PC-9 (cell line): ENCODE measurements at regions of chr10 and their contacts with region 1.

Region 1: DNA sequence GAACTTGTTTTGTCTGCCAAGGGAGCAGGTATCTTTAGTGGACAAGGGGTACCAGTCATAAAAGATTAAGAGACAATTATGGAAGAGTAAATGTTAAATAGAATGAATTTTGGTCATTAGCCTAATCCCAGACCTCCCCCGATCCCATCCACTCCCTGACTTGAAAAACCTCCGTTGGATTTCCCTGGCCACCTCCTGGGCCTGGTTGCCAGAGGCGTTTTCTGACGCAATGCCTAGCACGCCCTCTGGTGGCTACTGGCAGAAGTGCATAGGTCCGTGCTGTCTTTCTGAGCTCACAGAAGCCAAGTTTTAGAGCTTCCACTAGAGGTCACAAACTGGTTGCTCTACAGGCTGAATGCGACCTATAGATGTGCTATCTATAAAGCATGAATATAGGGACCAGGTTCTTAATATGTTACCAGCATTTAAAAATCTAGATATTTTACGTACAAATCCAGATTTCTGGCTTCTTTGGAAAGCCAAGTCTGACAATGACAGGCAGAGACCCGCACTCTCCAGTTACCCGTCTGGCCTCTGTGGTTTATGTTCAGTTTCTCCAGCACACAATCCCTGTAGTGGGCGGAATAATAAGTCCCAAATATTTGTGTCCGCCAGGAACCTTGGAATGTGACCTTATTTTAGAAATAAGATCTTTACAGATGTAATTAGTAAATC is 39.8 kb downstream of the SPOCK2 start:
- DNase-seq: peak; percentile 88 to 92
- H3K4me3 ChIP-seq: no peak overlapping the region
- H3K27ac ChIP-seq: no peak overlapping the region
- H3K4me1 ChIP-seq: peaks cover 8% of the 10 kb centered on the region; the same call in 1 of the 2 replicates
- H3K27me3 ChIP-seq: no peaks in the 10 kb centered on the region
- CTCF ChIP-seq: peak; percentile 100

Region 2: DNA sequence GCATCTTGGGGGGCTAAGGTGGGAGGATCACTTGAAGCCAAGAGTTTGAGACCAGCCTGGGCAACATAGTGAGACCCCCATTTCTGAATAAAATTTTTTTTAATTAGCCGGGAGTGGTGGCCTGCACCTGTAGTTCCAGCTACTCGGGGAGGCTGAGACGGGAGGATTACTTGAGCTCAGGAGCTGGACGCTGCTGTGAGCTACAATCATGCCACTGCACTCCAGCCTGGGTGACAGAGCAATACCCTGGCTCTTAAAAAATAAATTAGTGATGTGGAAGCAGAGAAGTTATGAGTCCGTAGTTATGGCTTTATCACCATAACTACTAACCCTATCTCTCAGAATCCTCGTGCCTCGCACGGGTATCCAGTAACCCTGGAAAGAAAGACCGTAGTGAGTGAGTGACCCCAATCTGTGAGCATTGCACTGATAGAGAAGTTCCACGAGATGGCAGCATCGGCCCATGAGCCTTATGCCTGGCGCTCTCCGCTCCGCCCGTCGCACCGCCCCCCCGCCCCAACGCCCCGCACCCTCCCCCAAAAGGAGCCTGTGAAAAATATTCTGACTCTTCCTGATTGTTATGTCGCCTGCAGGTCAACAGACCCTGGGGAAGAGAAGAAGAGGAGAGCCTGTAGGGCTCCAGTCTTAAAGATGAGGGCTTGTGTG is 734.4 kb before region 1 on chr10:
- CTCF ChIA-PET with region 1: no interaction called
- POLR2A ChIA-PET with region 1: no interaction called
- intact Hi-C with region 1: loop called (anchors 5 kb)
- DNase-seq: peak in 1 of 2 experiments; percentile 46
- H3K4me3 ChIP-seq: no peak overlapping the region
- H3K27ac ChIP-seq: no peak overlapping the region
- H3K4me1 ChIP-seq: peaks cover 14% of the 10 kb centered on the region
- H3K27me3 ChIP-seq: no peaks in the 10 kb centered on the region
- CTCF ChIP-seq: peak; percentile 91

Region 3: DNA sequence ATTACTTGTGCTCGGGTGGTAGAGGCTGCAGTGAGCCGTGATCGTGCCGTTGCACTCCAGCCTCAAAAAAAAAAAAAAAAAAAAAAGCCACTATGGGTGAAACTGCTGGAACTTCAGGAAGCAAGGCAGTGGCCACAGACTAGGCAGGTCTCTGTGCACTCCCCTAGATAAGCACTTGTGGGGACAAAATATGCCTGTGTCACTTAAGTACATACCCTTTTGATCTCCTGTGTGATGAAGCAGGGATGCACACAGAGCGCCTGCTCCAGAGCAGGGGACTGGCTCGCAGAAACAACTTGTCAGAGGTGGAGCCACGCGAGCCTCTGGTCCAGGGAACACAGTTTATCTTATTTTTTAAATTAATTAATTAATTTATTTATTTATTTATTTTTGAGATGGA is 154.7 kb before region 1 on chr10:
- CTCF ChIA-PET with region 1: interaction called, 24 read pairs
- POLR2A ChIA-PET with region 1: interaction called, 4 read pairs
- intact Hi-C with region 1: loop called (anchors 1 kb)
- DNase-seq: no peak
- H3K4me3 ChIP-seq: no peak overlapping the region
- H3K27ac ChIP-seq: no peak overlapping the region
- H3K4me1 ChIP-seq: peaks cover 16% of the 10 kb centered on the region
- H3K27me3 ChIP-seq: no peaks in the 10 kb centered on the region
- CTCF ChIP-seq: no peak

Region 4: DNA sequence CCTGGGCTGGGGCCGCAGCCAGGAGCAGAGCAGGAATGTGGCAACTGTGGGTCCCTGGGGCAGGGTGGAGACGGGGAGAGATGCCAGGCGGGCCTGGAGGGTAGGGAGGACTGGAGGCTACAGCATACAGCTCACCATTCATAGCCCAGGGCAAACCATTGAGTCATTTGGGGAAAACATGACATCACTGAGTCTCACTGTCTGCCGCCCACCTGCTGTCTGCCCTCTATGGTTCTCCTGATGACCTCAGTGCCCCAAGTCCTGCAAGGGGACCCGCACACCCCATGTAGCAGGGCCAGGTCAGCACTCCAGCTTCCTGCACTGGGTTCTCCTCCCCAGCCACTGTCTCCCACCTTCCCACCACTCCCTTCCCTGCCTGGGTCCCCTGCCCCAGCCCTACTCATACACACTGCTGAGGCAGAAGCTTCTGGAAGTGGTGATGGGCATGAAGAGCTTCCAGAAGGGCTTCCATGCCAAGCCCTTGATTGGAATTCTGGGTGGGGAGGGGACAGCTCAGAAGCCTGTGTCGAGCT is 74.0 kb before region 1 on chr10:
- CTCF ChIA-PET with region 1: interaction called, 7 read pairs
- POLR2A ChIA-PET with region 1: no interaction called
- intact Hi-C with region 1: loop called (anchors 5 kb)
- DNase-seq: peak; percentile 69 to 91
- H3K4me3 ChIP-seq: no peak overlapping the region
- H3K27ac ChIP-seq: peak overlapping the region; percentile 56
- H3K4me1 ChIP-seq: peaks cover 37% of the 10 kb centered on the region
- H3K27me3 ChIP-seq: no peaks in the 10 kb centered on the region
- CTCF ChIP-seq: no peak

Region 5: GRCh38 chr10:72079356-72079755 is 30.8 kb after region 1 on chr10:
- CTCF ChIA-PET with region 1: no interaction called
- POLR2A ChIA-PET with region 1: no interaction called
- intact Hi-C with region 1: loop called (anchors 1 kb)
- DNase-seq: peak in 1 of 2 experiments; percentile 25
- H3K4me3 ChIP-seq: no peak overlapping the region
- H3K27ac ChIP-seq: peak overlapping the region; percentile 86
- H3K4me1 ChIP-seq: peaks cover 54% of the 10 kb centered on the region
- H3K27me3 ChIP-seq: no peaks in the 10 kb centered on the region
- CTCF ChIP-seq: no peak

Region 6: DNA sequence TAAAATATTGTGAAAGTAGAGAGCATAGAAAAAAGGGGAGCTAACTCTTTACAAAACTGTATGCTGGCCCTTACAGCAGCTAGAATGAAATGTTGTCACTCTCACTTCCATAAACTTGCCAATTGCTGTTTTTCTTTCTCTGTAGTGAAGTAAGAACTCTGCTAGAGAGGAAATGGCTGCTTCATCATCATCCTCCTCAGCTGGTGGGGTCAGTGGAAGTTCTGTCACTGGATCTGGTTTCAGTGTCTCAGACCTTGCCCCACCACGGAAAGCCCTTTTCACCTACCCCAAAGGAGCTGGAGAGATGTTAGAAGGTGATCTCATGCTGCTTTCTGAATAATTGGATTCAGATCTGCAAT is 175.1 kb after region 1 on chr10:
- CTCF ChIA-PET with region 1: interaction called, 4 read pairs
- POLR2A ChIA-PET with region 1: no interaction called
- intact Hi-C with region 1: loop called (anchors 1 kb)
- DNase-seq: no peak
- H3K4me3 ChIP-seq: no peak overlapping the region
- H3K27ac ChIP-seq: peak overlapping the region; percentile 23; the same call in 1 of the 2 replicates
- H3K4me1 ChIP-seq: peaks cover 13% of the 10 kb centered on the region
- H3K27me3 ChIP-seq: no peaks in the 10 kb centered on the region
- CTCF ChIP-seq: no peak

Region 7: GRCh38 chr10:72331601-72332422 is 283.2 kb after region 1 on chr10:
- CTCF ChIA-PET with region 1: interaction called, 7 read pairs
- POLR2A ChIA-PET with region 1: no interaction called
- intact Hi-C with region 1: loop called (anchors 1 kb)
- DNase-seq: peak; percentile 95 to 99
- H3K4me3 ChIP-seq: peak overlapping the region; percentile 36; the same call in 1 of the 2 replicates
- H3K27ac ChIP-seq: peak overlapping the region; percentile 95
- H3K4me1 ChIP-seq: peaks cover 64% of the 10 kb centered on the region
- H3K27me3 ChIP-seq: no peaks in the 10 kb centered on the region
- CTCF ChIP-seq: peak; percentile 44

Region 8: DNA sequence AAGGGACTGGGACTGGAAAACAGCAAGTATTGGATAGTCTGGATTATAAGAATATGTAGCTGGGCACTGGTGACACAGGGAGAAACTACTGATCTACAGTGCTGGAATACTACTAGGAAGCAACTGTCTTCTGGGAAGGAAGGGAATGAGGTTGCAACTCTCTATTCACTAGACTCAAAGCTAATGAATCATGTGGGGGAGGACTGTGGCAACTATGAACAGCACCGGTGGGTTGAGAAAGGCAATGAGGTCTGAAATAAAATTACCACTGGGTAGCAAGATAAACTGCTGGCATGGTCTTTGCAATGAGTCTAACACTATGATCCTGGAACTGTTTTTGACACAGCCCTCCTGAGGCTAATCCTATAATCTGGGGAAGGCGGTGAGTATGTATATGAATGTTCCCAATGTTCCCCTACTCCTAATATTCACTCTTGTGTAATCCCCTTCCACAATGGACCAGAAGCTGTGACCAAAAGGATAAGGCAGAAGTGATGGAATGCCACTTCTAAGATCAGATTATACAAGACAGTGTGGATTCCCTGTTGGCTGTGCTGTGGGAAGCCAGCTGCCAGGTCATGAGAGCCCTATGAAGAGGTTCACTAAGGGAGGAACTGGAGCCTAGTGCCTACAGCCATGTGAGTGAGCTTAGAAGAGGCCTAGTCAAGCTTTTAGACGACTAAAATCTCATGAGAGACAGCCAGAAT is 407.5 kb after region 1 on chr10:
- CTCF ChIA-PET with region 1: no interaction called
- POLR2A ChIA-PET with region 1: no interaction called
- intact Hi-C with region 1: no loop called
- DNase-seq: no peak
- H3K4me3 ChIP-seq: no peak overlapping the region
- H3K27ac ChIP-seq: no peak overlapping the region
- H3K4me1 ChIP-seq: no peaks in the 10 kb centered on the region
- H3K27me3 ChIP-seq: no peaks in the 10 kb centered on the region
- CTCF ChIP-seq: no peak